ENCODE measurements at regions of chr7 and their contacts with region 1.

Region 1: GRCh38 chr7:74449809-74450397 is 3.8 kb upstream of the GTF2IRD1 start:
- DNase-seq: peak; percentile 84
- CTCF ChIP-seq: peak; percentile 67

Region 2: DNA sequence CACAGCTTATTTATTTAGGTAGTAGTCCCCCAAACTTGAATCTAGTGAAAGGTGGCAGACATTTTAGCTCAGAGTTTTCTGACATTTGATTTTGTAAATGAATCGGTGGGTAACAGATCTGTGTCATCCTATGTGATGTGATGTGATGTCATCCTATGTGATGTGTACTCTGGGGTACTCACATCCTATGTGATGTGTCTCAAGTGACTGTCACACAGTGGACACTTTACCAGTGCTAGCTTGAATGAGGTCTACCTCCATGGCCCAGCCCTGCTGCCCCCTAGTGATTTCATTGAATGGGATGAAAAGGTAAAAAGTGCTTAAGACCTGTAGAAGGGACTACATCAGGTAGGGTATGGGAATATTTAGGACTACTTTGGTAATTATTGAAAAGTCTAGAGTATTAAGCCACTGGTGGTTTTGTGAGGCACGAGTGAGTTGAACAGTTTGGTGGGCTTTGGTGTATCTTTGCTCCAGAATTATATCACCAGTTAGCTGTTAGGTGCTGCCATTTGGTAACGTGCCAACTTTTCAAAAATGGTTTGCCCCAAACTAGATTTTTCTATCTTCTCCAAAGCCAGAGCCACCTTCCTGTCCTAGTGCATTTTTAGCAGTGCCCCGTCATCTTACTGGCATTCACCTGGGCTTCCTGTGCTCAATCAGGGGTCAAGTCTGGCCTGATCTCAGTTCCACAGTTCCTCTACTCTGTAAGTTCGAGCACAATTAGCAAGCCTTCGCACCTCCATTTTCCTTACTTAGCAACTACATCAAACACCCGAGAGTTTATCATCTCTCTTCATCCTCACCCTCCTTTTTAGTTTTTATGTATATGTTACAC is 266.1 kb before region 1 on chr7:
- CTCF ChIA-PET with region 1: no interaction called
- POLR2A ChIA-PET with region 1: no interaction called
- DNase-seq: no peak
- CTCF ChIP-seq: peak; percentile 42

Region 3: DNA sequence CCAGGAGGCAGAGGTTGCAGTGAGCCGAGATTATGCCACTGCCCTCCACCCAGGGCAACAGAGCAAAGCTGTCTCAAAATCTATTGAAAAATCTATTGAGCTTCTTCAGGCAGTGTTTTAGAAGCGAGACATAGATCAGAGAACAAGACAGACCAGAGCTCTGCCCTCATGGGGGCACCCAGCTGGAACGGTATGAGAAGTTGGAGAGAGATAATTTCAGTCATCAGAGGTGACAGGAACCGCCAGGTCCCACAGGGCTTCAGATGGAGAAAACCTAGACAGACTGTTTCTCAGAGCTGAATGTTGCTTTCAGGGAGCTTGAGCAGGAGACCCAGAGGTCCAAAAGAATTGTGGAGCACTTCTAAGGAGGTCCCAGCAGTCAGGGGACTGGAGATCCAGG is 10.4 kb before region 1 on chr7:
- CTCF ChIA-PET with region 1: interaction called, 22 read pairs
- POLR2A ChIA-PET with region 1: no interaction called
- DNase-seq: no peak
- CTCF ChIP-seq: no peak

Region 4: GRCh38 chr7:74466196-74466813 is 16.4 kb after region 1 on chr7:
- CTCF ChIA-PET with region 1: interaction called, 11 read pairs
- POLR2A ChIA-PET with region 1: no interaction called
- DNase-seq: no peak
- CTCF ChIP-seq: no peak